Activated CD4-positive, alpha-beta T cell treated with anti-CD3 and anti-CD28 coated beads, Interleukin-2, amount 10 ng/mL, durations not matched to agents 24 days and 14 days (primary cell): ENCODE measurements at regions of chr15 and their contacts with region 1.

Region 1: GRCh38 chr15:90851940-90852339 is 16.4 kb upstream of the FURIN start:
- DNase-seq: peak; percentile 88
- H3K4me3 Mint-ChIP-seq: peak overlapping the region; percentile 72
- H3K27ac Mint-ChIP-seq: peak overlapping the region; percentile 94
- H3K4me1 Mint-ChIP-seq: peaks cover 64% of the 10 kb centered on the region
- H3K27me3 Mint-ChIP-seq: no peaks in the 10 kb centered on the region

Region 2: DNA sequence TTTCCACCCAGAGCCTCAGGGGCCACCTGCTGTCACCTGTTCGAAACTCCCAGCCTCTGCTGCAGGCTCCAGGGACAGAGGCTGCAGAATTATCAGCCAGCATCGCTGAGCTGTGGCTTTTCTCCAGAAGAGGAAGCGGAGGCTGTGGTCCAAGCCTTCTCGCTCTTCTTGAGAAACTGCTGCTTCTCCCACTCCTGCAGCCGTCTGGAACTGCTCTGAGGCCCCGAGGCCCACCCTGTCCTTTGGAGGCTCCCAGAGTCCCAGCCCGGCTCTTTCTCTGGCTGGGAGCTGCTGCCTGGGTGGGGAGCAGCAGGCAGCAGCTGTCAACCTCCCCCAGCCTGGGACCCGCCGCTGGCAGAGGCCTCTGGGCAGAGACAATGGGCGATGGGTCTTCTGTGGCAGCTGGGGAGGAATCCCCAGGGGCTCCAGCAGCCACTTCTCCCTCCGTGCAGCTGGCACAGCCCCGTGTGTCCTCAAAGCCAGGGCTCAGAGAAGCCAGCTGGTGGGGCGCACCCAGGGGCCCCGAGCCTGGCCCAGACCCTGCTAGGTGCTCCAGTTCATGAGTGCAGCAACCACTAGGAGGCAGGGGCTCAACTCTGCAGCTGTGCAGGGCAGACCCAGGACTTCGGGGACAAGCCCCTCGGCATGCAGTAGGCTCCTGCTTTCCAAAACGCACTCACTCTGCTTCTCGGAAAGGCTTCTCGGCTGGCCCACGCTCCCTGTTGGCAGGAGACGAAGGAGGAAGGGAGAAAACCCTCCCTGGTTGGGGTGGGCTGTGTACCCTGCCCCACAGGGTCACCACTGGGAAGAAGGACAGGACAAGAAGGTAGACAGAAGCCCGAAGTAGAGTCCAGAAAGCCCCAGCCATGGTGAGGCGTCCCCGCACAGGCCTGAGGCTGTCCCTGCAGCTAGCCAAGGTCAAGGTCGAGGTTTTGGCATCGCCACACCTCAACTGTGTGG is 33.4 kb before region 1 on chr15:
- intact Hi-C with region 1: loop called (anchors 1 kb)
- DNase-seq: peak; percentile 86
- H3K4me3 Mint-ChIP-seq: peak overlapping the region; percentile 80
- H3K27ac Mint-ChIP-seq: peak overlapping the region; percentile 99
- H3K4me1 Mint-ChIP-seq: peaks cover 69% of the 10 kb centered on the region
- H3K27me3 Mint-ChIP-seq: no peaks in the 10 kb centered on the region